PC-3 (cell line): ENCODE measurements at regions of chr17 and their contacts with region 1.

Region 1: DNA sequence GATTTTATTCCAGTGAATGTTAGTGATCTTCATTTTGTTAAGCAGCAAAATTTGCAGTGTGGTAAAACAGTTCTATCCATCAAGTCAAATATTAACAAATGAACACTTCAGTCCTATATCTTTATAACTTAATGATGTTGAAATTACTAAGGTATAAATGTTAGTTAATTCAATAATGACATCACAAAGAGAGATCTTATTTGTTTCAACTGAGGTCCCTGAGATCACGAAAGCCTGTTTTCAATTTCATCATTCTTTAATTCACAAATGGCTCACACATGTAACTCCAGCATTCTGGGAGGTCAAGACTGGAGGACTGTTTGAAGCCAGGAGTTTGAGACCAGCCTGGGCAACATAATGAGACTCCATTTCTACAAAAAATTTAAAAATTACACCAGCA is 13.9 kb downstream of the SMURF2 start:
- DNase-seq: no peak
- ATAC-seq: no peak
- H3K4me3 ChIP-seq: no peak overlapping the region
- H3K27ac ChIP-seq: no peak overlapping the region
- H3K4me1 ChIP-seq: peaks cover 20% of the 10 kb centered on the region
- H3K27me3 ChIP-seq: no peaks in the 10 kb centered on the region
- CTCF ChIP-seq: no peak

Region 2: DNA sequence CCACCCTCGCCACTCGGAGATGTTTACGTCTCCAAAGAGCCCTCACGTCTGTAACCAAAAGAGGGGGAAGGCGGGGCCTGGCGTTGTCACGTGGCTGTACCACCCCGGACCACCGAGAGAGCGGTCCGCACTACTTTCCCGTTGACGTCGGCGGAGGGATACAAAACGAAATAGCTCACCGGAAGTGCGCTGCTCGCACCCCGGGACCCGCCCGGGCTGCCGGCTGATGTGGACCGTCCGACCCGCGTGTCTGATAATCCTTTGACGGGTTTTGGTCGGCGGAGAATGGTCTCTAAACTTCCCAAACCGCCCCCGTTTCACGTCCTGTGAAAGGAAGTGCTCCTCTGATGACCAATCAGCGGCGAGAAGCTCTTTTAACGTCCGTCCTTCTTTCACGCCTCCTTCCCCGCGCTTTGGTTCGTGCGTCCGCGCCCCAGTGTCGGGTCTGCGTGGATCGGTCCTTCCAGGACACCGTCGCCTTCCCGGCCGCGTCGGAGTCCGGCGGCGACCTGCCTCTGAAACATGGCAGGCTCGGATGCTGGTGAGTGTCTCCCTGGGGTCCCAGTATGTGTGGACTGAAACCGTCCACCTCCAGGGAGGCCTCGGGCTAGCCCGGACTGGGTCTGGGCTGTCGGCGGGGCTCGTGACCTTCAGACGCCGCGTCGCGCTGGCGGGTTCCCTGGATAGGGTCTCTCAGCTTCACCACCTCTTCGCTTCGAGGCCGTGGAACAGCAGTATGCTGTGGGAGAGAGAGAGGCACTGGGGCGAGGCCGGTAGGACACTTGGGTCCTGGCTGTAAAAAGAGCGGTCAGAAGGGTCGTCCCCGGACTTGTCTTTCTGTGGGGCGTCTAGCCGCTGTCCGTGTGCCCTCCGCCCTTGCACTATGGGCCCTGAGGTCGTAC is 141.4 kb before region 1 on chr17 and contains the start of gene CEP95:
- CTCF ChIA-PET with region 1: no interaction called
- POLR2A ChIA-PET with region 1: no interaction called
- intact Hi-C with region 1: loop called (anchors 5 kb)
- DNase-seq: peak; percentile 96
- ATAC-seq: peak; percentile 66
- H3K4me3 ChIP-seq: peak within 1 kb of the TSS; percentile 86
- H3K27ac ChIP-seq: peak within 1 kb of the TSS; percentile 90
- H3K4me1 ChIP-seq: peaks cover 34% of the 10 kb centered on the region
- H3K27me3 ChIP-seq: no peaks in the 10 kb centered on the region
- CTCF ChIP-seq: no peak
- total RNA-seq, gene CEP95: 32.4 and 59.1 TPM in 2 replicates

Region 3: GRCh38 chr17:64580384-64581315 is 67.6 kb before region 1 on chr17:
- CTCF ChIA-PET with region 1: interaction called, 4 read pairs
- POLR2A ChIA-PET with region 1: no interaction called
- intact Hi-C with region 1: loop called (anchors 5 kb)
- DNase-seq: no peak
- ATAC-seq: 0 out of 2 replicates have a peak, but pooled peaks have one; percentile 20
- H3K4me3 ChIP-seq: no peak overlapping the region
- H3K27ac ChIP-seq: no peak overlapping the region
- H3K4me1 ChIP-seq: peaks cover 22% of the 10 kb centered on the region
- H3K27me3 ChIP-seq: no peaks in the 10 kb centered on the region
- CTCF ChIP-seq: no peak

Region 4: DNA sequence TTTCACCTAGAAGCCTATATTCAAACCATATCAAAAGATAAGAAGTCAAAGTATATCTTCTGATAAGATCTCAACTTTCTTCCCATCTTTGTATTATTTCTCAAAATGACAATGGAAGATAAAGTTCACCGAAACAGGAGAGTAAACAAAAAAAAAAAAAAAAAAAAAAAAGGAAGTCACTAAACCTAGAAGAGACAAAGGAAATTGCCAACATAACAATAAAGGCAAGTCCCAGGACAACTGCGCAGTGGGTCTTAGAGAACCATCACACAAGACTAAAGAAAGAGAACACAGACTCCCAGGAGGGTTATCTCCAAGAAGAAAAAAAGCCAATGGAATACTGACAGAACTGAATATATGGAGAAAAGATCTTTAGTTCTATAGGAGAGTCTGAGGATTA is 51.8 kb before region 1 on chr17:
- CTCF ChIA-PET with region 1: no interaction called
- POLR2A ChIA-PET with region 1: no interaction called
- intact Hi-C with region 1: no loop called
- DNase-seq: no peak
- ATAC-seq: no peak
- H3K4me3 ChIP-seq: no peak overlapping the region
- H3K27ac ChIP-seq: no peak overlapping the region
- H3K4me1 ChIP-seq: no peaks in the 10 kb centered on the region
- H3K27me3 ChIP-seq: no peaks in the 10 kb centered on the region
- CTCF ChIP-seq: no peak

Region 5: GRCh38 chr17:64694207-64694606 is 46.0 kb after region 1 on chr17:
- CTCF ChIA-PET with region 1: no interaction called
- POLR2A ChIA-PET with region 1: no interaction called
- intact Hi-C with region 1: no loop called
- DNase-seq: peak; percentile 99
- ATAC-seq: peak; percentile 78
- H3K4me3 ChIP-seq: no peak overlapping the region
- H3K27ac ChIP-seq: peak overlapping the region; percentile 77
- H3K4me1 ChIP-seq: peaks cover 25% of the 10 kb centered on the region
- H3K27me3 ChIP-seq: no peaks in the 10 kb centered on the region
- CTCF ChIP-seq: no peak